ENCODE measurements at regions of chr17 and their contacts with region 1.

Region 1: GRCh38 chr17:74961657-74962490 is 10.7 kb downstream of the HID1 start:
- DNase-seq: peak; percentile 87
- ATAC-seq: peak; percentile 94

Region 2: GRCh38 chr17:75012346-75013091 is 50.6 kb after region 1 on chr17 and contains the start of gene MRPL58:
- intact Hi-C with region 1: loop called (anchors 5 kb)
- DNase-seq: peak; percentile 89
- ATAC-seq: peak; percentile 96
- total RNA-seq, gene MRPL58: 46.6 TPM

Region 3: DNA sequence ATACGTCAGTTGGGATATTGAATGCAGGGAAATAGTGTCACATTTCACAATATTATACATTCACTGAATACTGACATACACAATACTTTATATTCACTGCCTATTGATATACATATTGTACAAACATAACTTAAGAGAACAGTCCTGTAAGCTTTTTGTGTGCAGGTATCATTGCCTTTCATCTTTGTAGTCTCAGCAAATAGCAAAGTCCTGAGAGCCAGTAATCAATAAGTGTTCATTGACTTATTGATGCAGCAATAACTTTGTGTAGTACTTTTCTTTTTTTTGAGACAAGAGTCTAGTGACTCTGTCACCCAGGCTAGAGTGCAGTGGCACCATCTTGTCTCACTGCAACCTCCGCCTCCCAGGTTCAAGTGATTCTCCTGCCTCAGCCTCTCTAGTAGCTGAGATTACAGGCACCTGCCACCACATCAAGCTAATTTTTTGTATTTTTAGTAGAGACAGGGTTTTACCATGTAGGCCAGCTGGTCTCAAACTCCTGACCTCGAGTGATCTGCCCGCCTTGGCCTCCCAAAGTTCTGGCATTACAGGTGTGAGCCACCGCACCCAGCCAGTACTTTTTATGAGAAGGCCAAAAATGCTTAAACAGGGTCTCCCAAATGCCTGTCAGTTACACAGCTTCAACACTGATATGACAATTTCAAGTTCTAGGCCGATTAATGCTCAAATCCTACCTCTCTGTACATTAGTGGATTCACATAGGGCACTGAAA is 238.2 kb after region 1 on chr17:
- intact Hi-C with region 1: loop called (anchors 2 kb)
- DNase-seq: no peak
- ATAC-seq: no peak